CD4-positive, alpha-beta memory T cell (primary cell): ENCODE measurements at regions of chr13 and their contacts with region 1.

Region 1: DNA sequence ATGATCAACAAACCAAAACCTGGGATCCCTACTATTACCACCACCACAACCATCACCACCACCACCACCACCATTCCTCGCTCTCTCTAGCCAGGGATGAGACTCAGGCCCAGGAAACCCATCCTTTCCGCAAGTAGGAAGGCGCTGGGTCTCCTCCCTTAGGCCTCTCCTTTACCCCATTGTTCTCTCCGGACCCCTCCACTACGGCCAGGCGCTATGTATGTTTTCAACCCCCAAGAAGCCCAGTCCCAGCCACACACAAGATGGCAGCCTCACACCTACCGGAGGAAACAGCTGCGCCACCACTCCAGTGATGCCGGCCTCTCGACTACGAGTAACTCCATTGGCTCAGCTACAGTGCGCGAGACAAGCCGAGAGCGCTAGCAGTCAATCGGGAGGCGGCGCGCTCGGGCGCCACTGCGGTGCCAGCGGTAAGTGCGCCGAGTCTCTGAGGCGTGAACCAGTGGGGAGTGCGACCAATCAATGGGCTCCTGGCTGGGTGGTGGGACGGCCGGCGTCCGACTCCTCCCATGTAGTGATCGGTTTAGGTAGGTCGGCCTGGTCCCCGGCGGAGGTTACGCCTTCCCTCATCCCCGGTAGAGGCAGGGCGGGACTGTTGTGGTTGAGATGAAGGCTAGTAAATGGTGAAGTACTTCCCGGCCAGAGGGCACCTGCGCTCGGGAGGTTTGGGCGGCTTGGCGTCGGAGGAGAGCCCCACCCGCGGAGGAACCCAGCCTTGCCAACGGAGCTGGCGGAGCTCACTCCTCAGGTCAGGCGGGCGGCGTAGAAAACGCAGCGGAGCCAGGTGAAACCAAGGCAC is at the starts of genes CAB39L and SETDB2:
- DNase-seq: peak; percentile 99 to 100 (median 100)
- H3K4me3 ChIP-seq: peak within 1 kb of the TSS; percentile 72 to 88
- H3K4me3 Mint-ChIP-seq: peak within 1 kb of the TSS; percentile 92 to 98 (median 96)
- H3K27ac ChIP-seq: peak within 1 kb of the TSS; percentile 79
- H3K27ac Mint-ChIP-seq: peak within 1 kb of the TSS; percentile 93 to 99 (median 99)
- H3K4me1 ChIP-seq: peaks cover 50% of the 10 kb centered on the region
- H3K4me1 Mint-ChIP-seq: peaks cover 28 to 58% (median 41%) of the 10 kb centered on the region in 4 donors
- H3K27me3 ChIP-seq: no peaks in the 10 kb centered on the region
- H3K27me3 Mint-ChIP-seq: no peaks in the 10 kb centered on the region
- total RNA-seq, gene CAB39L: 5.7 to 7.7 TPM
- total RNA-seq, gene SETDB2: 27.6 to 28.2 TPM

Region 2: GRCh38 chr13:48653472-48653939 is 790.4 kb before region 1 on chr13 and contains the start of gene CYSLTR2:
- CTCF ChIA-PET with region 1: no interaction called
- POLR2A ChIA-PET with region 1: no interaction called
- intact Hi-C with region 1: loop called (anchors 10 kb)
- DNase-seq: peak; percentile 69 to 89 (median 86)
- H3K4me3 ChIP-seq: peak within 1 kb of the TSS; percentile 30 to 55
- H3K4me3 Mint-ChIP-seq: peak within 1 kb of the TSS; percentile 81 to 90 (median 89)
- H3K27ac ChIP-seq: peak within 1 kb of the TSS; percentile 69
- H3K27ac Mint-ChIP-seq: peak within 1 kb of the TSS; percentile 88 to 98 (median 95)
- H3K4me1 ChIP-seq: peaks cover 51% of the 10 kb centered on the region
- H3K4me1 Mint-ChIP-seq: peaks cover 27 to 53% (median 43%) of the 10 kb centered on the region in 4 donors
- H3K27me3 ChIP-seq: no peaks in the 10 kb centered on the region
- H3K27me3 Mint-ChIP-seq: no peaks in the 10 kb centered on the region
- total RNA-seq, gene CYSLTR2: 3.3 to 3.7 TPM

Region 3: DNA sequence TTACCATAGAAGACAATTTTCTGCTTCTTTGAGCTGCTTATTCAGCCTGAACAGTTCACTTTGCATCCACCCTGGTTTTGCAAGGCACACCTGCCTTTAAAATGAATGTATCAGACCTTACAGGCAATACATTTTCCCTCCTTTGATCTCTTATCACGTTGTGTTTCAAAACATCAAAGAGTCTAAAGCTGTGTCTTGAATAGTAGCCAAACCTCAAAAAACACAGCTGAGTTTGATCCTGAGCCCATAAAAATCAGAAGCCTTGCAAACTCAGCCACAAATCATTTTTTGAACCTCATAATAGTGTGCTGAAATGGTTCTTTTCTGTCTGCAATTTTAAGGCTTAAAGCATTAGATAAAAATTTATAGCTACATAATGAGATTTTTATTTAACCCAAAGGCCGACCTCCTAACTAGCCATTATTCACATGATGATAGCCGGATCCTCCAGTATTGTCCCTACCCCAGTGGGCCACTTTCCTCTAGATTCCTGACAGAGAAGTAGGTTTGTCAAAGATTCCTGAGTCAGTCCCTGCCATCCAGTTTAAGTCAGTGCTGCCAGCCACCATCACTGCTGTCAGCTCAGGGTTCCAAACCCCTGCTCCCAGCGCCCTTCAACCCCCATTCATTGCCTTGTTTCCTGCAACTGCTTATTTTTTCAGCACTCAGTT is 71.8 kb before region 1 on chr13:
- CTCF ChIA-PET with region 1: no interaction called
- POLR2A ChIA-PET with region 1: interaction called, 19 read pairs
- intact Hi-C with region 1: loop called (anchors 2 kb)
- DNase-seq: peak; percentile 51 to 78 (median 75)
- H3K4me3 ChIP-seq: no peak overlapping the region
- H3K4me3 Mint-ChIP-seq: peak overlapping the region in 7 of 8 donors; percentile 43 to 74 (median 59)
- H3K27ac ChIP-seq: no peak overlapping the region
- H3K27ac Mint-ChIP-seq: peak overlapping the region in 5 of 7 donors; percentile 57 to 78 (median 68)
- H3K4me1 ChIP-seq: peaks cover 25% of the 10 kb centered on the region
- H3K4me1 Mint-ChIP-seq: peaks cover 17 to 36% (median 26%) of the 10 kb centered on the region in 4 donors
- H3K27me3 ChIP-seq: no peaks in the 10 kb centered on the region
- H3K27me3 Mint-ChIP-seq: peaks cover 0 to 6% of the 10 kb centered on the region in 2 donors

Region 4: DNA sequence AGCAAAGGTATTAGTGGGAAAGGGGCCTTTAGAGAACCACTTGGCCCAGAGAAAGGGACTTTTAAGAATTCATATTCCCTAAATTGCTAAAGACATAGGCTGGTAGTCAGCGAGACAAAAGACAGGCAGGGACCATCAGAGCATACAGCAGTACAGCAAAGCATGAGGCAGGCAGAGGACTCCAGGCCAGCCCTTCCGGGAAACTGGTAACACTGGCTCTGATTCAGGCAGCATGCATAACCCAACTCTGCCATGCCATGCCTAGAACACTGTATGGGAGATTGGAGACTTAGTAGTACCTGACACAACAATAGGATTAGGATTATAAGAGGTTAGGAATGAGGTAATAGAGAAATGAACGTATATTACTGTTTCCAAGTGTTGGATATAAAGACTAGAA is 34.9 kb before region 1 on chr13:
- CTCF ChIA-PET with region 1: no interaction called
- POLR2A ChIA-PET with region 1: no interaction called
- intact Hi-C with region 1: no loop called
- DNase-seq: no peak
- H3K4me3 ChIP-seq: no peak overlapping the region
- H3K4me3 Mint-ChIP-seq: no peak overlapping the region
- H3K27ac ChIP-seq: no peak overlapping the region
- H3K27ac Mint-ChIP-seq: peak overlapping the region in 1 of 7 donors; percentile 44
- H3K4me1 ChIP-seq: no peaks in the 10 kb centered on the region
- H3K4me1 Mint-ChIP-seq: no peaks in the 10 kb centered on the region
- H3K27me3 ChIP-seq: no peaks in the 10 kb centered on the region
- H3K27me3 Mint-ChIP-seq: no peaks in the 10 kb centered on the region

Region 5: GRCh38 chr13:49495783-49496762 is 52.2 kb after region 1 on chr13 and contains the start of gene PHF11:
- CTCF ChIA-PET with region 1: interaction called, 22 read pairs
- POLR2A ChIA-PET with region 1: interaction called, 138 read pairs
- intact Hi-C with region 1: loop called (anchors 1 kb)
- DNase-seq: peak; percentile 85 to 93 (median 87)
- H3K4me3 ChIP-seq: peak within 1 kb of the TSS; percentile 58 to 74
- H3K4me3 Mint-ChIP-seq: peak within 1 kb of the TSS; percentile 98 to 99 (median 98)
- H3K27ac ChIP-seq: peak within 1 kb of the TSS; percentile 94
- H3K27ac Mint-ChIP-seq: peak within 1 kb of the TSS; percentile 99
- H3K4me1 ChIP-seq: peaks cover 54% of the 10 kb centered on the region
- H3K4me1 Mint-ChIP-seq: peaks cover 40 to 64% (median 49%) of the 10 kb centered on the region in 4 donors
- H3K27me3 ChIP-seq: no peaks in the 10 kb centered on the region
- H3K27me3 Mint-ChIP-seq: no peaks in the 10 kb centered on the region
- total RNA-seq, gene PHF11: 138 to 139 TPM

Region 6: DNA sequence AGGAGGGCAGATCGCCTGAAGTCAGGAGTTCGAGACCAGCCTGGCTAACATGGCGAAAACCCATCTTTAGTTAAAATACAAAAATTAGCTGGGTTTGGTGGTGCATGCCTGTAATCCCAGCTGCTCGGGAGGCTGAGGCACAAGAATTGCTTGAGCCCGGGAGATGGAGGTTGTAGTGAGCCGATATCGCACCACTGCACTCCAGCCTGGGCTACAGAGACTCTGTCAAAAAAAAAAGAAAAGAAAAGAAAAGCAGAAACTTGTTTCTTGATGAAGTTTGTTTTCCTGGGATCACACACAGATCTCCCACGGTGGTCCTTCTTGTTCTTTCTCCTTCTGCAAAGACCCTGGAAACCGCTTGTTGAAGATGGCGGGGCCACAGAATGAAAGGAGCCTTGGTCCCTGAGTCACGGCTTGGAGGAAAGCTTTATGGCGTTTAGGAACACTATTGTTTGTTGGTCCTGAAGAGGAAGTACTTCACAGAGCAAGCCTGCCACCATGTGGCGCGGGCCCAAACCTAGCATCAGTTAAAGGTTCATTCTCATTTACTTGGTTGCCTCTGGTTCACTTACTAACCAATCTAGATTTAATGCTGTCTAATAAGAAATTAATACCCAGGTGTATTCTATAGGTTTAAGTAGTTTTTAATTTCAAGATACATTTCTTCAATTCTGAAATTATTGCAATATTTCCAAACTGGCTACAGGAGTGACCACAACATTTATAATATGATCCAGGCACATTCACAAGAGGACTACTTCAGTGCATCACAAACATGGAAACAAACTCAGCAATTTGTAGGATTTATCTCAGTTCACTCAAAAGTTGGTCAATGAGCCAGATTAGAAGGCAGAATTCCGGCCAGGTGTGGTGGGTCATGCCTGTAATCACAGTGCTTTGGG is 163.1 kb after region 1 on chr13:
- CTCF ChIA-PET with region 1: interaction called, 6 read pairs
- POLR2A ChIA-PET with region 1: interaction called, 5 read pairs
- intact Hi-C with region 1: loop called (anchors 2 kb)
- DNase-seq: peak; percentile 72 to 78 (median 77)
- H3K4me3 ChIP-seq: peak overlapping the region in 1 of 2 donors; percentile 13
- H3K4me3 Mint-ChIP-seq: peak overlapping the region; percentile 82 to 95 (median 89)
- H3K27ac ChIP-seq: no peak overlapping the region
- H3K27ac Mint-ChIP-seq: peak overlapping the region in 6 of 7 donors; percentile 22 to 95 (median 72)
- H3K4me1 ChIP-seq: no peaks in the 10 kb centered on the region
- H3K4me1 Mint-ChIP-seq: peaks cover 2 to 5% (median 3%) of the 10 kb centered on the region in 4 donors
- H3K27me3 ChIP-seq: no peaks in the 10 kb centered on the region
- H3K27me3 Mint-ChIP-seq: no peaks in the 10 kb centered on the region